Calu3 (cell line): ENCODE measurements at regions of chr5 and their contacts with region 1.

Region 1: DNA sequence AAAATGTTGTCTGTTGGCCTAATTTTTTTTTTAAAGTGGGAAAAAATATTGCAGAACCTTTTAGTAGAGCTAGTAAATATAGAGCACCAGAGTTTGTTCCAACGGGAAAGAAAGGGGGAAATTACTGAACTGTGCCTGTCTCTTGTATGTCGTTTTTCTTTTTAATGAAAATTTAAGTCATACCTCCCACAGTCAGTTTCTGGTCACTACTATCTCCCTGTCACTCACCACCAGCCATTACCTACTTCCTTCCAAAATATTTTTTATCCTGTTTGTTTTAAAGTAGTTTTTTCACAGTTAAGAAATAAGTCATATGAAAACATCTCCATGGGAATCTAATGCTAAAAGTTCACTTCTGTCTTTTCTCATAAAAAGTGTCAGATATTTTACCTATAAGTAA is 21.3 kb downstream of the GPR151 start:
- DNase-seq: no peak
- H3K4me3 Mint-ChIP-seq: no peak overlapping the region
- H3K27ac Mint-ChIP-seq: no peak overlapping the region
- H3K4me1 Mint-ChIP-seq: peaks cover 10% of the 10 kb centered on the region
- H3K27me3 Mint-ChIP-seq: no peaks in the 10 kb centered on the region
- CTCF ChIP-seq: no peak

Region 2: GRCh38 chr5:146428658-146429057 is 66.0 kb before region 1 on chr5:
- CTCF ChIA-PET with region 1: no interaction called
- intact Hi-C with region 1: no loop called
- DNase-seq: no peak
- H3K4me3 Mint-ChIP-seq: no peak overlapping the region
- H3K27ac Mint-ChIP-seq: no peak overlapping the region
- H3K4me1 Mint-ChIP-seq: peaks cover 8% of the 10 kb centered on the region
- H3K27me3 Mint-ChIP-seq: peaks cover 41% of the 10 kb centered on the region
- CTCF ChIP-seq: no peak

Region 3: GRCh38 chr5:146461319-146461718 is 33.3 kb before region 1 on chr5:
- CTCF ChIA-PET with region 1: no interaction called
- intact Hi-C with region 1: loop called (anchors 5 kb)
- DNase-seq: no peak
- H3K4me3 Mint-ChIP-seq: no peak overlapping the region
- H3K27ac Mint-ChIP-seq: no peak overlapping the region
- H3K4me1 Mint-ChIP-seq: peaks cover 42% of the 10 kb centered on the region
- H3K27me3 Mint-ChIP-seq: no peaks in the 10 kb centered on the region
- CTCF ChIP-seq: no peak

Region 4: GRCh38 chr5:146588326-146589027 is 93.8 kb after region 1 on chr5:
- CTCF ChIA-PET with region 1: no interaction called
- intact Hi-C with region 1: no loop called
- DNase-seq: no peak
- H3K4me3 Mint-ChIP-seq: no peak overlapping the region
- H3K27ac Mint-ChIP-seq: no peak overlapping the region
- H3K4me1 Mint-ChIP-seq: no peaks in the 10 kb centered on the region
- H3K27me3 Mint-ChIP-seq: peaks cover 15% of the 10 kb centered on the region
- CTCF ChIP-seq: no peak